IMR-90 (cell line): ENCODE measurements at regions of chr10 and their contacts with region 1.

Region 1: DNA sequence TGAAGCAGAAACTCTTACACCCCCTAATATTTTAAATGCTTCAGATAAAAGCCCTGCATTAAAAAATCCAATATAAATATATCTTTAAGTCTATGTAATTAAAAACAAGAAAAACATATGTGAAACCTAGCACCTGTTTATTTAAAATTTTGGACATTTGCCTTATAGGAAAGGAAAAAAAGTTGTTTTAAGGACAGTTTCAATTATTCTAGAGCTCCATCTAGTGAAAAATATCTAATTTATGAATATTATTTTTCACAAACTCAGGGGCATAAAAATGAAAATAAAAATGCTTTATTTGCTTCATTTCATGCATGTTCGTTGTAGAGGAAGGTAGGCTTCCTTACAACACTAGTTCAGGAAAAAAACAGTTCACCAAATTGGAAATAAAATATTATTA is 26.1 kb downstream of the ENKUR start:
- DNase-seq: peak; percentile 23
- ATAC-seq: no peak
- H3K4me3 ChIP-seq: no peak overlapping the region
- H3K27ac ChIP-seq: no peak overlapping the region
- H3K4me1 ChIP-seq: no peaks in the 10 kb centered on the region
- H3K27me3 ChIP-seq: no peaks in the 10 kb centered on the region
- CTCF ChIP-seq: peak; percentile 38; the same call in 1 of the 2 replicates
- POLR2A ChIP-seq: no peak
- RAD21 ChIP-seq: peak; percentile 55

Region 2: GRCh38 chr10:24642622-24643417 is 347.0 kb before region 1 on chr10:
- CTCF ChIA-PET with region 1: interaction called, 4 read pairs
- POLR2A ChIA-PET with region 1: no interaction called
- dilution Hi-C with region 1: no loop called
- in situ Hi-C with region 1: loop called (anchors 10 kb)
- intact Hi-C with region 1: loop called (anchors 2 kb)
- DNase-seq: peak; percentile 88
- ATAC-seq: peak; percentile 91
- H3K4me3 ChIP-seq: no peak overlapping the region
- H3K27ac ChIP-seq: no peak overlapping the region
- H3K4me1 ChIP-seq: peaks cover 6% of the 10 kb centered on the region
- H3K27me3 ChIP-seq: no peaks in the 10 kb centered on the region
- CTCF ChIP-seq: peak; percentile 83
- POLR2A ChIP-seq: no peak
- RAD21 ChIP-seq: peak; percentile 88

Region 3: DNA sequence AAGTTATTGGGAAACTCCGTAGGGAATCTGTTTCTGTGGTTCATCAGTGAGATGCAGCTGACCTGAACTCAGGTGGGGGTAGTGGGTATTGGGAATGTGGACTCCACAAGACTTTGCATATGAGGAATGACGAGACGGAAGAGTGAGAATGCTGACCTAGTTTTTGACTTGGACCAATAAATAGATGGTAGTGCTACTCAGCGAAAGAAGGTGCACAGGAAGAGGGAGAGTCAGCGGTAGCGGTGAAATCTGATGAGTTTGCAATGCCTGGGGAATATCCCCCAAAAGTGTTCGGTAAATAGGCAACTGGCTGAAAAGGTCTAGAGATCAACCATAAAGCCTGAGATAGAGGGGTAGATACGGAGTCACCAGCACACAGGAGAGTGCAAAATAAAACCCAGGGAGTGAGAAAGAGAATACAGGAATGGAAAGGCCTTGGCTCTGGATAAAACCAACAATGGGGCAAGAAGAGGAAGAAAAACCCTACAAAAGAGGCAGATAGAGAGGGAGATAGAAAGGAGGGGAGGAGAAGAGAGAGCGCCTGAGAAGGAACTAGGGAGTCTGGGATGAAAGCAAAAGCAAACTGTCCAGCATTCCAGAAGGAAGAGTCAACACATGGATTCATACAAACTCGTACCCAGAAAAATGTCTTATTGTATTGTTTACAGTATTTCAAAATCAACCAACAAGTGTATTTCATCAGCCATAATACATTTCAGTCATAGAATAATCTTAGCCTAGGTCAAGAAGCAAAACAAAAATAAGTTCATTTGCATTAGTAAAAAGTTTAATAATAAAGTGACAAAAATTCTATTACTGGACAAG is 271.6 kb before region 1 on chr10:
- CTCF ChIA-PET with region 1: no interaction called
- POLR2A ChIA-PET with region 1: no interaction called
- dilution Hi-C with region 1: no loop called
- in situ Hi-C with region 1: no loop called
- intact Hi-C with region 1: loop called (anchors 2 kb)
- DNase-seq: peak; percentile 90
- ATAC-seq: peak; percentile 63
- H3K4me3 ChIP-seq: peak overlapping the region; percentile 1; the same call in 1 of the 2 replicates
- H3K27ac ChIP-seq: peak overlapping the region; percentile 73
- H3K4me1 ChIP-seq: peaks cover 17% of the 10 kb centered on the region
- H3K27me3 ChIP-seq: no peaks in the 10 kb centered on the region
- CTCF ChIP-seq: no peak
- POLR2A ChIP-seq: no peak
- RAD21 ChIP-seq: no peak

Region 4: GRCh38 chr10:25174461-25175230 is 184.8 kb after region 1 on chr10 and contains the start of gene GPR158:
- CTCF ChIA-PET with region 1: no interaction called
- POLR2A ChIA-PET with region 1: no interaction called
- dilution Hi-C with region 1: no loop called
- in situ Hi-C with region 1: no loop called
- intact Hi-C with region 1: no loop called
- DNase-seq: peak; percentile 85
- ATAC-seq: peak; percentile 98
- H3K4me3 ChIP-seq: peak within 1 kb of the TSS; percentile 46
- H3K27ac ChIP-seq: no peak within 1 kb of the TSS
- H3K4me1 ChIP-seq: no peaks in the 10 kb centered on the region
- H3K27me3 ChIP-seq: peaks cover 21% of the 10 kb centered on the region
- CTCF ChIP-seq: no peak
- POLR2A ChIP-seq: no peak
- RAD21 ChIP-seq: no peak
- total RNA-seq, gene GPR158: not detected in 2 replicates